ENCODE measurements at regions of chr11 and their contacts with region 1.

Region 1: DNA sequence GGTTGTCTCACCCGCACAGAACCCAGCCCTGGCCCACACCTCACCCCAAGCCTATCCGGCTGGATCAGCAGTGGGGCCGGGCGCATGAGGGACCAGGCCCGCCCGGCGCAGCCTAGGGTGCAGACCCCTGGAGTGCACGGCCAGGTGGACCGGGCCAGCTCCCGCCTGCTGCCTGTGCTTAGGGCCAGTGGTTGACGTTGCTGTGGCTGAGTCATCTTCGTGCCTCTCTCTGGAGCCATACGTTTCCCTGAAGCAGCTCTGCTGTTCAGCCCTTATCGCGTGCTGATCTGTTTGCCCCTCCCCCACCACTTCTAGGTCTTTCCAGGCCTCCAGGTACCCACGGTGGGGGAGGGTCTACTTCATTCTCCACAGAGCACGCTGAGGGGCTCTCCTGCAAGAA is 39.5 kb downstream of the CDKN1C start:
- DNase-seq: no peak
- ATAC-seq: no peak
- H3K4me3 Mint-ChIP-seq: no peak overlapping the region
- H3K27ac Mint-ChIP-seq: no peak overlapping the region
- H3K4me1 Mint-ChIP-seq: 0 out of 2 replicates have a peak, but pooled peaks cover 2% of the 10 kb centered on the region
- H3K27me3 Mint-ChIP-seq: peaks cover 31% of the 10 kb centered on the region
- CTCF ChIP-seq: no peak

Region 2: GRCh38 chr11:2857276-2857675 is 11.2 kb after region 1 on chr11:
- CTCF ChIA-PET with region 1: interaction called, 11 read pairs
- POLR2A ChIA-PET with region 1: interaction called, 4 read pairs
- DNase-seq: no peak
- ATAC-seq: no peak
- H3K4me3 Mint-ChIP-seq: no peak overlapping the region
- H3K27ac Mint-ChIP-seq: no peak overlapping the region
- H3K4me1 Mint-ChIP-seq: peaks cover 10% of the 10 kb centered on the region; the same call in 1 of the 2 replicates
- H3K27me3 Mint-ChIP-seq: peaks cover 62% of the 10 kb centered on the region
- CTCF ChIP-seq: no peak